ENCODE measurements at regions of chr16 and their contacts with region 1.

Region 1: GRCh38 chr16:10521681-10522274 is 58.6 kb downstream of the EMP2 start:
- DNase-seq: peak in 3 of 5 donors; percentile 34 to 42 (median 37)
- H3K4me3 ChIP-seq: no peak overlapping the region
- H3K4me3 Mint-ChIP-seq: no peak overlapping the region
- H3K27ac ChIP-seq: no peak overlapping the region
- H3K27ac Mint-ChIP-seq: no peak overlapping the region
- H3K4me1 ChIP-seq: no peaks in the 10 kb centered on the region
- H3K4me1 Mint-ChIP-seq: peaks cover 0 to 4% (median 2%) of the 10 kb centered on the region in 4 donors
- H3K27me3 ChIP-seq: no peaks in the 10 kb centered on the region
- H3K27me3 Mint-ChIP-seq: peaks cover 0 to 2% of the 10 kb centered on the region in 2 donors

Region 2: GRCh38 chr16:10473246-10473645 is 48.5 kb before region 1 on chr16:
- CTCF ChIA-PET with region 1: no interaction called
- POLR2A ChIA-PET with region 1: no interaction called
- intact Hi-C with region 1: no loop called
- DNase-seq: no peak
- H3K4me3 ChIP-seq: no peak overlapping the region
- H3K4me3 Mint-ChIP-seq: no peak overlapping the region
- H3K27ac ChIP-seq: no peak overlapping the region
- H3K27ac Mint-ChIP-seq: no peak overlapping the region
- H3K4me1 ChIP-seq: no peaks in the 10 kb centered on the region
- H3K4me1 Mint-ChIP-seq: no peaks in the 10 kb centered on the region
- H3K27me3 ChIP-seq: no peaks in the 10 kb centered on the region
- H3K27me3 Mint-ChIP-seq: no peaks in the 10 kb centered on the region

Region 3: GRCh38 chr16:10731790-10732189 is 210.0 kb after region 1 on chr16:
- CTCF ChIA-PET with region 1: interaction called, 171 read pairs
- POLR2A ChIA-PET with region 1: no interaction called
- intact Hi-C with region 1: no loop called
- DNase-seq: no peak
- H3K4me3 ChIP-seq: no peak overlapping the region
- H3K4me3 Mint-ChIP-seq: no peak overlapping the region
- H3K27ac ChIP-seq: no peak overlapping the region
- H3K27ac Mint-ChIP-seq: peak overlapping the region in 1 of 7 donors; percentile 57
- H3K4me1 ChIP-seq: no peaks in the 10 kb centered on the region
- H3K4me1 Mint-ChIP-seq: peaks cover 0 to under 1% (median under 1%) of the 10 kb centered on the region in 4 donors
- H3K27me3 ChIP-seq: no peaks in the 10 kb centered on the region
- H3K27me3 Mint-ChIP-seq: no peaks in the 10 kb centered on the region

Region 4: GRCh38 chr16:10737068-10737625 is 215.4 kb after region 1 on chr16:
- CTCF ChIA-PET with region 1: interaction called, 171 read pairs
- POLR2A ChIA-PET with region 1: no interaction called
- intact Hi-C with region 1: loop called (anchors 1 kb)
- DNase-seq: peak; percentile 76 to 78 (median 78)
- H3K4me3 ChIP-seq: peak overlapping the region in 1 of 2 donors; percentile 20
- H3K4me3 Mint-ChIP-seq: peak overlapping the region; percentile 64 to 82 (median 74)
- H3K27ac ChIP-seq: peak overlapping the region; percentile 19
- H3K27ac Mint-ChIP-seq: peak overlapping the region; percentile 36 to 91 (median 86)
- H3K4me1 ChIP-seq: peaks cover 14% of the 10 kb centered on the region
- H3K4me1 Mint-ChIP-seq: peaks cover 3 to 12% (median 9%) of the 10 kb centered on the region in 4 donors
- H3K27me3 ChIP-seq: no peaks in the 10 kb centered on the region
- H3K27me3 Mint-ChIP-seq: no peaks in the 10 kb centered on the region

Measured in CD4-positive, alpha-beta memory T cell (primary cell).